ENCODE measurements at regions of chr7 and their contacts with region 1.

Region 1: GRCh38 chr7:100691676-100692577 is 2.1 kb downstream of the GIGYF1 start:
- DNase-seq: no peak
- H3K4me3 ChIP-seq: peak overlapping the region; percentile 74
- CTCF ChIP-seq: peak; percentile 88

Region 2: DNA sequence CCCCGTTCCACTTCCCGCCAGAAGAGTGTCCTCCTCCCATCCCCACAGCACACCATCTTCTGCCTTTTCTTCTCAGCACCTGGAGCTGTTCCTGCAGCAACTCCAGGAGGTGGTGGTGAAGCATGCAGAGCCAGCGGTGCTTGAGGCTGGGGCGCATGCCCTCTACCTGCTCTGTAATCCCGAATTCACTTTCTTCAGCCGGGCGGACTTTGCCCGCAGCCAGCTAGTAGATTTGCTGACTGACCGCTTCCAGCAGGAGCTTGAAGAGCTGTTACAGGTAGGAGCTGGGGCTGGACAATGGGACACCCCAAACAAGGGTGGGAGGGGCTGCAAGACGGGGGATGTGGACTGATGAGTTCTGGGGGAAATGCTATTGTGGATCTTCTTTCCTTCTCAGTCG is 491.2 kb before region 1 on chr7:
- CTCF ChIA-PET with region 1: no interaction called
- POLR2A ChIA-PET with region 1: no interaction called
- DNase-seq: no peak
- H3K4me3 ChIP-seq: no peak overlapping the region
- CTCF ChIP-seq: no peak

Region 3: DNA sequence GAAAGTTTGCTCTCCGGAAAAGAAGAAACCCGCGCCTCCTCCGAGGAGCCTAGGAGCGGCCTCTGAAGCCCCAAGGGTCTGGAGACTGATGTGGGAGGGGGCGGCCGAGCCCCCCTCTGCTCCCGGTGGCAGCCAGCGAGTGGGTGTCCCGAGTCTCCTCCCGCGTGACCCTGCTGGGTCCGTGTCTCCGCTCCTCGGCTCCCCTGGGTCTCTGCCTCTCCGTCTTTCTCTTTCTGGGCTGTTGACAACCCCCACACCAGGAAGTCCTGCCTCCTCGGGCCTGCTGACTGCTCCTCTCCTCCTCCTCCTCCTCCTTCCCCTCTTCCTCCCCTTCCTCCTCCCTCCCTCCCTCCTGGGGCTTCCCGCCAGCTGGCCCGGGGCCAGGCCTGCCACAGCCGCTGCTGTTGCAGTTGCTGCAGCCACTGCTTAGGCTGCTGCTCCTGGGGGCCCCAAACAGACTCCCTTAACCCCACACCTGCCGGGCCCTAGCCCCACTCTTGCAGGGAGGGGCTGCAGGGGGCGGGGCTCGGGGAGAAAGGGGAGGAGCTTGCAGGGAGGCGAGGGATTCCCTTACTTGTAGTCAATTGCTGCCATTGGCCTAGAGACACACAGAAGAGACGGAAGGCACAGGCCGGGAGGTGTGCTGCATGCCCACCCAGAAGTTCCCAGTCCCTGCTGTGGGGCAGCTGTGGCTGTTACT is 212.8 kb before region 1 on chr7 and contains the start of gene TSC22D4:
- CTCF ChIA-PET with region 1: interaction called, 16 read pairs
- POLR2A ChIA-PET with region 1: no interaction called
- DNase-seq: peak; percentile 73
- H3K4me3 ChIP-seq: peak within 1 kb of the TSS; percentile 90
- CTCF ChIP-seq: no peak

Region 4: DNA sequence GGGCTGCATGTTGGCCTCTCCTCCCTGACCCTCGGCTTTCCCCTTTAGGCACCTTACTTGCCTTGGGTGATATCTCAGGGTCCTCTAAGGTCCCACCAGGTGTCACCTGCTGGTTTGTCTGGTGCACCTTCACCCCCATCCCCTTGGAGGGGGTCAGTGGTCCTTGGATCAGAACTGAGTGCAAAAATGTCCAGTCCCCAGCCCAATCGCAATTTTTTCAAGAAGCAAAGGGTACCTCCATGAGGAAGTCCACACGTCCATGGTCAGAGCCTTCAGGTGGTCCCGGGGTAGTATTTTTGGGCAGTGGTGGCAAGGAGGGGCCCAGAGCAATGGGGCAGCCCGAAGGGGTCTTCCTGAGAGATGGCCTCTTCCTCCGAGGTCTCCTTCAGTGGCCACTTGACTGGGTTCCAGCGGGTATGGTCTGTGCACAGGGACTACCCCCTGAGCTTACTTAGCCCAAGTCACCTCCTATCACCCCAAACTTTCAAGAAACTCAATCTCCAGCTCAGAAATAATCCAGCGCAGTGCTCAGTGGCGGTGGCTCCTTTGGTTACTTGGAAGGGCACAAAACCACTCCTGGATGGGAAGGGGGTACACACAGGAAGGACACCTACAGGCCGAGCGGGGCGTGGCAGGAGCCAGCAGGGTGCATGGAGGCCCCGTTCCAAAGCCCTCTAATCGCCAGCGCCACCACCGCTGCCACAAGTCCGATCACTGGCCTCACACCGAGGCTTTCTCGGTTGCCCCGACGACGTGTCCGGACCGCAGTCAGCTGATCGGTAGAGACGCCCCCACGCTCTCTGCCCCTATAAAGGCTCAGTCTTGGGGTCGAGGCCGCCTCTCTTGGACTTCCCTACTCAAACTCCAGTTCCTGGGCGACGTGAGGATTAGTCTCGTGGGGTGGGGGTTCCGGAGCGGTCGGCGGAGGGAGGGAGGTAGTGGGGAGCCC is 122.8 kb before region 1 on chr7:
- CTCF ChIA-PET with region 1: interaction called, 65 read pairs
- POLR2A ChIA-PET with region 1: no interaction called
- DNase-seq: no peak
- H3K4me3 ChIP-seq: peak overlapping the region; percentile 34
- CTCF ChIP-seq: peak; percentile 39

Region 5: DNA sequence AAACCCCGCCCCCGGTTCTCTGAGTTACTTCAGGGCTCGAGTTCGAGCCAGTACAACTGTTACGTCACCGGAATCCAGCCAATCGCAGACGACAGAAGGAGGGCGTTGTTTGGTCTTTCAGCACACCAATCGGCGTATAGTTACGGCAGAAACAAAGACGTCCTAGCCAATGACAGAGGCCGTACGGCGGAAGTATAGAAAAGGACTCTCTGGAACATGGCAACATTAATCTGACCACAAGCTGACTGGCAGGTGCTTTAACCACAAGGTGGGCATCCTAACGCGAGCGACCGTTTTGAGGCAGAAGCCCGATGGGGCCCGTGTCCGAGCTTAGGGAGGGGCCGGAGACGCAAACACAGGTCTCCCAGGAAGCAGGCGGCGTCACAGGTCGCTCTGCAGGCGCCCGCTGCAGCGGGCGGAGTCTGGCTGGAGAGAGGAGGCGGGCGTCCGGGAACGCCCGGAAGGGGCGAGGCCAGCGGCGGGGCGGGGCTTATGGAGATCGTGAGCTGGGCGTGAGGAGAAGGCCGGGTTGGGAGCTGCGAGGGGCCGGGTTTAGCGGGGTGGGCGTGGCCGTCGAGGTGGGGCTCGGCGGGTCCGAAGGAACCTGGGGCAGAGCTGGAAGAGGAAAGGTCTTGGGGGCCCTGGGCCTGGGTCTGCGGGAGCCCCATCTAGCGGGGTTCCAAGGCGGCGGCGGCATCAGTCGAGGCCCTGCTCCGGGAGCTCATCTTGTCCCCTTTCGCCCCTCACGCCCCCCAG is 79.8 kb before region 1 on chr7 and contains the start of gene MOSPD3:
- CTCF ChIA-PET with region 1: interaction called, 33 read pairs
- POLR2A ChIA-PET with region 1: interaction called, 3 read pairs
- DNase-seq: peak; percentile 94
- H3K4me3 ChIP-seq: peak within 1 kb of the TSS; percentile 68
- CTCF ChIP-seq: no peak

Region 6: GRCh38 chr7:100705753-100706671 is 14.1 kb after region 1 on chr7 and contains the start of gene POP7:
- CTCF ChIA-PET with region 1: interaction called, 119 read pairs
- POLR2A ChIA-PET with region 1: interaction called, 17 read pairs
- DNase-seq: peak; percentile 88
- H3K4me3 ChIP-seq: peak within 1 kb of the TSS; percentile 92
- CTCF ChIP-seq: no peak